Ascending aorta (tissue), 2 donors: ENCODE measurements at regions of chr2 and their contacts with region 1.

Region 1: GRCh38 chr2:27703638-27704341 is 40.1 kb downstream of the SLC4A1AP start:
- DNase-seq: peak; percentile 61 to 95
- H3K4me3 ChIP-seq: no peak overlapping the region
- H3K27ac ChIP-seq: peak overlapping the region; percentile 95 to 97
- H3K4me1 ChIP-seq: peaks cover 28 to 30% of the 10 kb centered on the region in 2 donors
- H3K27me3 ChIP-seq: no peaks in the 10 kb centered on the region
- CTCF ChIP-seq: peak; percentile 85 to 95 (median 90)

Region 2: GRCh38 chr2:27559228-27559627 is 144.6 kb before region 1 on chr2:
- intact Hi-C with region 1: no loop called
- DNase-seq: no peak
- H3K4me3 ChIP-seq: no peak overlapping the region
- H3K27ac ChIP-seq: no peak overlapping the region
- H3K4me1 ChIP-seq: no peaks in the 10 kb centered on the region
- H3K27me3 ChIP-seq: no peaks in the 10 kb centered on the region
- CTCF ChIP-seq: no peak

Region 3: DNA sequence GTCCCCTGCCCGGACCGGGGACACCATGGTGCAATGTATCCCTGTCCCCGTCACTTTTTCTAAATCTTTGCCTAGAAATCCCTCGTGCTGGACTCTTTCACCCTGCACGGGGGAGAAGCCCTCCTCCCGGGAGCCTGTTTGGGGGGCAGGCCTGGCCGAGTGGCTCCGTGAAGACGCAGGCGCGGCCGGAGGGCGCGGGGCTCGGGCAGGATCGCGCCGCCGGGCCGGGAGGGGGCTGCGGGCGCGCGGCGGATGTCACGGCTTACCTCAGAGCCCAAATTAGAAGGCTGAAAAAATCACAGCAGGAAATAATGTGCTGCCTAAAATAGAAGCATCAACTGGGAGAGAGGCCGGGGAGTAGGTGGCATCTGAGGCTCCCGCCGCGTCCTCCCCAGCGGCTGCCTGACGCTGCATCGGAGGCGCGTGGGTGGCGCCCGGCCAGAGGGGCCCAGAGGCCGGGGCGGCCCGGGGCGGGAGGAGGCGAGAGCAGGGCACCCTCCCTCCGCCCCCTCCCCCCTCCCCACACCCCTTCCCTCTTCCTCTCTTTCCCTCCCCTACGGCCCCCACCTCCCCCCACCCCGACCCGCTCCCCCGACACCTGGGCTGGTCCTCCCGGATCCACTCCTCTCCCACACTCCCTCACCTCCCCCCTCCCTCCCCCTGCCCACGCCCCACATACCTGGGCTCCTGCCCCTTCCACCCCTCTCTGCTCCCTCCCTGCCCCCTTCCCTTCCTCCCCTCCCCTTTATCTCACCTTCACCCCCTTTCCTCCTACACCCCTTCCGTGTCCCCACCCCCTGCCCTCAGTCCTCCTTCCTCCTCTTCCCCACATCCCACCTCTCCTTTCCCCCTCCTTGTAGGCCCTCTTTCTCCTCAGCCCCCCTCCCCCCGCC is 11.8 kb after region 1 on chr2:
- intact Hi-C with region 1: loop called (anchors 1 kb)
- DNase-seq: peak in 1 of 2 donors; percentile 92
- H3K4me3 ChIP-seq: peak overlapping the region; percentile 35 to 41
- H3K27ac ChIP-seq: peak overlapping the region; percentile 95 to 97
- H3K4me1 ChIP-seq: peaks cover 11 to 42% of the 10 kb centered on the region in 2 donors
- H3K27me3 ChIP-seq: no peaks in the 10 kb centered on the region
- CTCF ChIP-seq: no peak

Region 4: GRCh38 chr2:27798948-27799645 is 95.3 kb after region 1 on chr2:
- intact Hi-C with region 1: loop called (anchors 1 kb)
- DNase-seq: peak; percentile 58 to 95
- H3K4me3 ChIP-seq: no peak overlapping the region
- H3K27ac ChIP-seq: peak overlapping the region; percentile 96 to 98
- H3K4me1 ChIP-seq: peaks cover 30 to 57% of the 10 kb centered on the region in 2 donors
- H3K27me3 ChIP-seq: no peaks in the 10 kb centered on the region
- CTCF ChIP-seq: no peak

Region 5: DNA sequence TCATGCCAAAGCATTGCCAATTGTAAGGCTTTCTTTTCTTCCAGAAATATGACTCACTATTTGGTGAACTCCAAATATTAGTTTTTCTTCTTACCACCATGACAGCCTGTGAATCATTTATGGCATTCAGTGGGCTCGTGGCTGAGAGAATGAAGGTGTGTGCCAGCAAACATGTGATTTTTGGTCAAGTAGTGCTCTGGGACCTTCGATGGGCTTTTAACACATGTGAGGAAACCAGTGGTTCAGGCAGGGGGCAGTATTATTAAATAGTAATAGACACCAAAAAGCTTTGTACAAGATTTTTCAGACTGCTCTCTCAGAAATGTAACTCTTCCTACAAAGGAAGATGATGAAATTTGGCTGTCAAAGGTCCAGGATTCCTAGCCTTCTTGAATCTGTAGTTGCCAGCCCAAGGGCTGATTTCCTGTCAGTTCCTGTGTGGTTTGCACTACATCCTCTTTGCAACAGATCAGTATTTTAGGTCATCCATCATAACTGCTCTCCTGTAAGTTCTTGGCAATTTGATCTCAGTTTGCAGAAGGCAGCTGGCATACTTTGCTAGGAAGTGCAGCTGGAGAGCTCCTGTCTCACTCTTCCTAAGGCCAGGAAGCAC is 251.1 kb after region 1 on chr2:
- intact Hi-C with region 1: loop called (anchors 5 kb)
- DNase-seq: peak; percentile 51 to 89
- H3K4me3 ChIP-seq: no peak overlapping the region
- H3K27ac ChIP-seq: peak overlapping the region; percentile 71 to 77
- H3K4me1 ChIP-seq: peaks cover 19 to 34% of the 10 kb centered on the region in 2 donors
- H3K27me3 ChIP-seq: no peaks in the 10 kb centered on the region
- CTCF ChIP-seq: peak in 2 of 3 experiments; percentile 16 to 46

Region 6: DNA sequence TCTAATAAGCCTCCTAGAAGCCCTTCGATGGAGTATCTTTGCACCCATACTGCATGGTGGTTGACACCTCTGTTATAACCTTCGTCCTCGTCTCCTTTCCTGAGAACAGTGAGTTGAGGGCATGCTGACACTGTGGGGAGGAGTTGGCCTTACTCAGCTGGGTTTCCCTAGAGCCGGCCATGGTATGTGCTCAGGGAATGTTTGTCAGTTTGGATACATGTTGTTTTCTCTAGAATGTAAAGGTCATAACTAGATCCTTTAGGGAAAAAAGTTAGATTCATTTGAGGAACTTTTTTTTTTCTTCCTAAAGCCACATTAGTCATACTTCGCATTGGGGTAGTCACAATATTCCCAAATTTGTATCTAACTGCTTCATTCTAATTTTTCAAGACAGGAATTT is 582.9 kb after region 1 on chr2:
- intact Hi-C with region 1: loop called (anchors 5 kb)
- DNase-seq: no peak
- H3K4me3 ChIP-seq: no peak overlapping the region
- H3K27ac ChIP-seq: peak overlapping the region; percentile 87 to 92
- H3K4me1 ChIP-seq: peaks cover 8 to 17% of the 10 kb centered on the region in 2 donors
- H3K27me3 ChIP-seq: no peaks in the 10 kb centered on the region
- CTCF ChIP-seq: no peak

Region 7: GRCh38 chr2:28452534-28453081 is 748.8 kb after region 1 on chr2:
- intact Hi-C with region 1: loop called (anchors 1 kb)
- DNase-seq: peak in 1 of 2 donors; percentile 81
- H3K4me3 ChIP-seq: no peak overlapping the region
- H3K27ac ChIP-seq: no peak overlapping the region
- H3K4me1 ChIP-seq: no peaks in the 10 kb centered on the region
- H3K27me3 ChIP-seq: no peaks in the 10 kb centered on the region
- CTCF ChIP-seq: peak; percentile 80 to 91 (median 82)